ENCODE measurements at regions of chr2 and their contacts with region 1.

Region 1: DNA sequence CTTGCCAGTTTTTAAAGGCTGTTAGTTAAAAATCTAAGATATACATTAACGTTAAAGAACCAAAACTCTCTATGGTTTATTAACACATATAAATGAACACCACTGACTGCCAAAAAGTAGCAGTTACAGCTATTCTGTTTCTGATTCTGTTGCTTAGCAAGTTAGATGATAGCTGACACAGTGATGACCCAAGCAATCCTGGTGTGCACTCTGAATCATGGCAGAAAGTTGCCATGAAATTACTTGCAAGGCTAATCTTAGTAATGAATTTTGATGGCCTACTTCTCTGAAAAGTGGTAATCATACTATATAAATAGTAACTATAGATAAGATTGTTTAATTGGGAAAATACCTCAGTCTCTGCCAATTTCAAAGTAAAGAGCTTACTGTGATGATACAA is 57.7 kb downstream of the ROCK2 start:
- DNase-seq: no peak
- ATAC-seq: no peak
- H3K4me3 ChIP-seq: no peak overlapping the region
- H3K27ac ChIP-seq: no peak overlapping the region
- H3K4me1 ChIP-seq: no peaks in the 10 kb centered on the region
- H3K27me3 ChIP-seq: no peaks in the 10 kb centered on the region
- CTCF ChIP-seq: no peak

Region 2: DNA sequence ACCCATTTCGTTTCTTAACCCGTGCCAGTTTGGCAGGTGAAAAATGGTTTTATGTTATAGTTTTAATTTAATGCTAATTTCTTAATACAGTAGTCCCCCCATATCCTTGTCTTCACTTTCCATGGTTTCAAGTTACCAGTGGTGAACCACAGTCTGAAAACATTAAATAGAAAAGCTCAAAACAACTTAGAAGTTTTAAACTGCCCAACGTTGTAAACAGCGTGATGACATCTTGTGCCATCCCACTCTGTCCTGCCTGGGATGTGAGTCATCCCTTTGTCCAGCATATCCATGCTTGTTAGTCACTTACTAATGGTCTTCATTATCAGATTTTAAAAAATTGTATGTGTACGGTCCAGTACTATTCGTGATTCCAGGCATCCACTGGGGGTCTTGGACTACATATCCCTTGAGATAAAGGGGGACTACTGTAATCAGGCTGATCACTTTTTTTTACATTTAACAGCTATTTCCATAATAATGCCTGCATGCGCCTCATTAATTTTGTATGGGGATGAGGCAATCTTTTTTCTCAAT is 99.6 kb before region 1 on chr2:
- CTCF ChIA-PET with region 1: no interaction called
- POLR2A ChIA-PET with region 1: no interaction called
- intact Hi-C with region 1: no loop called
- DNase-seq: peak; percentile 52
- ATAC-seq: peak; percentile 57
- H3K4me3 ChIP-seq: no peak overlapping the region
- H3K27ac ChIP-seq: no peak overlapping the region
- H3K4me1 ChIP-seq: peaks cover 7% of the 10 kb centered on the region; the same call in 1 of the 2 replicates
- H3K27me3 ChIP-seq: no peaks in the 10 kb centered on the region
- CTCF ChIP-seq: no peak

Region 3: GRCh38 chr2:11239666-11240462 is 46.9 kb before region 1 on chr2:
- CTCF ChIA-PET with region 1: no interaction called
- POLR2A ChIA-PET with region 1: no interaction called
- intact Hi-C with region 1: loop called (anchors 5 kb)
- DNase-seq: peak; percentile 26
- ATAC-seq: peak; percentile 72
- H3K4me3 ChIP-seq: no peak overlapping the region
- H3K27ac ChIP-seq: no peak overlapping the region
- H3K4me1 ChIP-seq: peaks cover 7% of the 10 kb centered on the region
- H3K27me3 ChIP-seq: no peaks in the 10 kb centered on the region
- CTCF ChIP-seq: no peak

Region 4: DNA sequence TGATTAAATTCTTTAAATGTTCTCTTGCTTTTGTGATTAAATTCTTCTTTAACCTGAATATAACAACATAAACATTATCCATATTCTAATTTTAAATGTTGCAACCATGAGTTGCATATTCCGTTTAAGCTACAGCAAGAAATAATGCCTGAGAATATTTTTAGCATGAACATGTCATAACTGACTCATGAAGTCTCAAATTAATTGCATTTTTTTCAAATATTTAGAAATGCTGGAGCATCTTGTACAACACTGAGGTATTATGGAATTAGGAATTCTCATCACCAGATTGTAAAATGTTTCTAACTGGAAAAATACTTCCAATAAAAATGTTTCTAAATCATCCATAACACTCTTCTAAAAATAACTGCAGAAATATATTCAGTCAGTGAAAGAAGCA is 43.0 kb after region 1 on chr2:
- CTCF ChIA-PET with region 1: no interaction called
- POLR2A ChIA-PET with region 1: no interaction called
- intact Hi-C with region 1: no loop called
- DNase-seq: peak; percentile 55
- ATAC-seq: peak; percentile 66
- H3K4me3 ChIP-seq: no peak overlapping the region
- H3K27ac ChIP-seq: no peak overlapping the region
- H3K4me1 ChIP-seq: peaks cover 17% of the 10 kb centered on the region
- H3K27me3 ChIP-seq: no peaks in the 10 kb centered on the region
- CTCF ChIP-seq: no peak

Measured in PC-3 (cell line).